PC-3 (cell line): ENCODE measurements at regions of chr14 and their contacts with region 1.

Region 1: GRCh38 chr14:89129570-89129969 is 287.5 kb downstream of the FOXN3 start:
- DNase-seq: no peak
- ATAC-seq: no peak
- H3K4me3 ChIP-seq: no peak overlapping the region
- H3K27ac ChIP-seq: no peak overlapping the region
- H3K4me1 ChIP-seq: peaks cover 9% of the 10 kb centered on the region
- H3K27me3 ChIP-seq: no peaks in the 10 kb centered on the region
- CTCF ChIP-seq: no peak

Region 2: DNA sequence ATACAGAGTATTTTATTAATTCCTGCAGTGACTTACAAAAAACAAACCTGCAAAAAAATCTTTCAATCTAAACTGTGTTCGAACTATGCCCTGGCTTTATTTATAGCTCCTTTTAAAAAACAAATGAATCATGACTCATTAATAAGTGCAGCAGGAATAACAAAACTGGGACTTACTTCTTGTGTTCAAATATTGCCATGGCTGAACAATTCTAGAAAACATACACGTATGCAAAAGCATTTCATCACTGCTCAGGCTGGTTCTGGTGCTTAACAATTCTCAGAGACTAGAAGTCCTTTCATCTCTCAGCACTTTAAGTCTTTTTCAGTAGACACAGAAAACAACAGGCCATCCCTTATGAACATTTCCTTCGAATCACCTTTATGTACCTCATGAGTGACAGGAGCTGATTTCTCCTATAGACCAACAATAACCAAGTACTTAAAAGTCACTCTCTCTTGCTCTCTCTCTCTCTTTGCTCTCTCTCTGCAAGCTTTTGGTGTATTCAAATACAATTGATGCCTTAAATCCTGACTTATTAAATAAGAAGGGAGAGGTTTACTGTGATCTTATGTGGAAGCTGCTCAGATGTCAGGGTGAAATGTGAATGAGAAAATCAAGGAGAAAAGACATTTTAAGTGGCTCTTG is 36.4 kb before region 1 on chr14:
- CTCF ChIA-PET with region 1: no interaction called
- POLR2A ChIA-PET with region 1: no interaction called
- intact Hi-C with region 1: loop called (anchors 5 kb)
- DNase-seq: peak; percentile 19
- ATAC-seq: peak; percentile 54
- H3K4me3 ChIP-seq: no peak overlapping the region
- H3K27ac ChIP-seq: no peak overlapping the region
- H3K4me1 ChIP-seq: no peaks in the 10 kb centered on the region
- H3K27me3 ChIP-seq: no peaks in the 10 kb centered on the region
- CTCF ChIP-seq: no peak

Region 3: GRCh38 chr14:89107626-89108025 is 21.9 kb before region 1 on chr14:
- CTCF ChIA-PET with region 1: no interaction called
- POLR2A ChIA-PET with region 1: no interaction called
- intact Hi-C with region 1: no loop called
- DNase-seq: no peak
- ATAC-seq: no peak
- H3K4me3 ChIP-seq: no peak overlapping the region
- H3K27ac ChIP-seq: no peak overlapping the region
- H3K4me1 ChIP-seq: no peaks in the 10 kb centered on the region
- H3K27me3 ChIP-seq: no peaks in the 10 kb centered on the region; the same call in 1 of the 2 replicates
- CTCF ChIP-seq: no peak